Activated CD8-positive, alpha-beta T cell treated with anti-CD3 and anti-CD28 coated beads, Interleukin-2, amount 10 ng/mL, durations not matched to agents 7 days and 5 days (primary cell): ENCODE measurements at regions of chr19 and their contacts with region 1.

Region 1: GRCh38 chr19:11798391-11799330 is at the start of gene ZNF491:
- DNase-seq: peak; percentile 91
- ATAC-seq: peak; percentile 99
- H3K4me3 Mint-ChIP-seq: peak within 1 kb of the TSS; percentile 85
- H3K27ac Mint-ChIP-seq: peak within 1 kb of the TSS; percentile 85
- H3K4me1 Mint-ChIP-seq: peaks cover 14% of the 10 kb centered on the region
- H3K27me3 Mint-ChIP-seq: peaks cover 4% of the 10 kb centered on the region
- total RNA-seq, gene ZNF491: 1.8 to 2.1 TPM

Region 2: DNA sequence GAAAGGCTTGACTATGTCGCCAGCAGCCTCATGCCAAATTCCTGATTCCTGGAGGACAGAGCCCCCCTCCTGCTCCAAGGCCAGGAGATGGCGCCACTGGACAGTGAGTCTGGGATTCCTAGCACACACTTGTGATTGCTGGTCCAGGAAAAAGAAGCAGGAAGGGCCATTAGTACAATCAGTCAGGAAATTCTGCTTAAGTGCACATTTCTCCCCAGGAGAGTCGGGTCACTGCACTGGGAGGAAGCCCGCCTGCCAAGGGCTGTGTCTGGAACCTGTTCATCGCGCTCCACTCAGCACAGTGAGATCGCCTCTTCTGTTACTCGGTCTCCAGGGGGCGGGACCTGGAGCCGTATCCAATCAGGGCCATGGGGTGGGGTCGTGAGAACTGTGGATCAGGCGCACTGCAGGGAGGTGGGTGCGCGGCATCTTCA is 125.0 kb before region 1 on chr19:
- CTCF ChIA-PET with region 1: no interaction called
- POLR2A ChIA-PET with region 1: no interaction called
- DNase-seq: peak; percentile 22
- ATAC-seq: no peak
- H3K4me3 Mint-ChIP-seq: peak overlapping the region; percentile 22
- H3K27ac Mint-ChIP-seq: no peak overlapping the region
- H3K4me1 Mint-ChIP-seq: peaks cover 2% of the 10 kb centered on the region
- H3K27me3 Mint-ChIP-seq: peaks cover 7% of the 10 kb centered on the region

Region 3: GRCh38 chr19:11752244-11752736 is 46.4 kb before region 1 on chr19:
- CTCF ChIA-PET with region 1: no interaction called
- POLR2A ChIA-PET with region 1: no interaction called
- DNase-seq: no peak
- ATAC-seq: no peak
- H3K4me3 Mint-ChIP-seq: no peak overlapping the region
- H3K27ac Mint-ChIP-seq: no peak overlapping the region
- H3K4me1 Mint-ChIP-seq: no peaks in the 10 kb centered on the region
- H3K27me3 Mint-ChIP-seq: peaks cover 18% of the 10 kb centered on the region

Region 4: GRCh38 chr19:11787536-11787935 is 11.1 kb before region 1 on chr19:
- CTCF ChIA-PET with region 1: interaction called, 13 read pairs
- POLR2A ChIA-PET with region 1: no interaction called
- DNase-seq: no peak
- ATAC-seq: no peak
- H3K4me3 Mint-ChIP-seq: no peak overlapping the region
- H3K27ac Mint-ChIP-seq: no peak overlapping the region
- H3K4me1 Mint-ChIP-seq: no peaks in the 10 kb centered on the region
- H3K27me3 Mint-ChIP-seq: no peaks in the 10 kb centered on the region

Region 5: GRCh38 chr19:11848594-11849469 is 50.2 kb after region 1 on chr19 and contains the start of gene ZNF439:
- CTCF ChIA-PET with region 1: interaction called, 13 read pairs
- POLR2A ChIA-PET with region 1: no interaction called
- DNase-seq: peak; percentile 95
- ATAC-seq: peak; percentile 100
- H3K4me3 Mint-ChIP-seq: peak within 1 kb of the TSS; percentile 79
- H3K27ac Mint-ChIP-seq: peak within 1 kb of the TSS; percentile 83
- H3K4me1 Mint-ChIP-seq: peaks cover 22% of the 10 kb centered on the region
- H3K27me3 Mint-ChIP-seq: no peaks in the 10 kb centered on the region
- total RNA-seq, gene ZNF439: 9.7 to 10.2 TPM

Region 6: DNA sequence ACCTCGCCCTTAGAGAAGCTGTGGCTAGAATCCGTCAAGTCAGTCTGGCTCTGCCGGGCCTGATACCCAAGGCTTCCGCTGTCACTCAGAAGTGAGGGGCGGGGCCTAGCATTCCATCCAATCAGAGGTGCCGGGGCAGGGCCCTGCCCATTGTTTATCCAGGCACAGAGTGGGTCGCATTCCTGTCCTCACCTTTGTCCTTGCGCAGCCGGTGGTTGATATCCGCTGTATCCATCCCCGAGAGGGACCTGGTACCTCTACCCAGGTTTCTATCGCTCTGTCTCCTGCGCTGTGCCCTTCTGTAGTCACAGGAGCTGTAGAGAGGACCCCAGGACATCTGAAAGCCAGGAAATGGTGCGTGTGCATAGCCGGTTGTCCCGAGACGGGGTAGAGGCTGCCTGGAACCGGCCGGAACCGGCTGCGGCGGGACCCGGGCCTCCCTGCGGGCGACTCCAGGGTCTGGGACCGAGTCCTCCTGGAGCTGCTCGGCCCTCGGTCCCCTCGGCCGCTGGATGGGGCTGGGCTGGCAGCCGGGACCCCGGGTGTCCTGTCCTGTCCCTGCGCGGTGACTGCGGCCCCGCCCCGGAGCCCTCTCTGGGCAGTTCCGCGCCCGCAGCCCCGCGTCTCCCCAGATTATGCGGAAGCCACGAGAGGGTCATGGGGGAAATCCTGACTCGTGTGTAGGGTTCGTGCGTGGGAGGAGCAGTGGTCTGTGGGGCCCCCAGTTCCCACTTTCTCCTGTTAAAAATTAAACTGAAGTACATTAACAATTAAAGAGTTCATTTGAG is 166.4 kb after region 1 on chr19 and contains the start of gene ZNF763:
- CTCF ChIA-PET with region 1: interaction called, 10 read pairs
- POLR2A ChIA-PET with region 1: no interaction called
- DNase-seq: peak; percentile 94
- ATAC-seq: peak; percentile 97
- H3K4me3 Mint-ChIP-seq: peak within 1 kb of the TSS; percentile 88
- H3K27ac Mint-ChIP-seq: peak within 1 kb of the TSS; percentile 88
- H3K4me1 Mint-ChIP-seq: peaks cover 27% of the 10 kb centered on the region
- H3K27me3 Mint-ChIP-seq: no peaks in the 10 kb centered on the region
- total RNA-seq, gene ZNF763: 2.0 to 2.3 TPM

Region 7: GRCh38 chr19:12139885-12140547 is 341.4 kb after region 1 on chr19 and contains the start of gene ZNF20:
- CTCF ChIA-PET with region 1: interaction called, 21 read pairs
- POLR2A ChIA-PET with region 1: no interaction called
- DNase-seq: peak; percentile 95
- ATAC-seq: peak; percentile 97
- H3K4me3 Mint-ChIP-seq: peak within 1 kb of the TSS; percentile 94
- H3K27ac Mint-ChIP-seq: peak within 1 kb of the TSS; percentile 87
- H3K4me1 Mint-ChIP-seq: peaks cover 35% of the 10 kb centered on the region
- H3K27me3 Mint-ChIP-seq: no peaks in the 10 kb centered on the region
- total RNA-seq, gene ZNF20: 3.2 to 4.1 TPM